CD14-positive monocyte (primary cell): ENCODE measurements at regions of chr3 and their contacts with region 1.

Region 1: DNA sequence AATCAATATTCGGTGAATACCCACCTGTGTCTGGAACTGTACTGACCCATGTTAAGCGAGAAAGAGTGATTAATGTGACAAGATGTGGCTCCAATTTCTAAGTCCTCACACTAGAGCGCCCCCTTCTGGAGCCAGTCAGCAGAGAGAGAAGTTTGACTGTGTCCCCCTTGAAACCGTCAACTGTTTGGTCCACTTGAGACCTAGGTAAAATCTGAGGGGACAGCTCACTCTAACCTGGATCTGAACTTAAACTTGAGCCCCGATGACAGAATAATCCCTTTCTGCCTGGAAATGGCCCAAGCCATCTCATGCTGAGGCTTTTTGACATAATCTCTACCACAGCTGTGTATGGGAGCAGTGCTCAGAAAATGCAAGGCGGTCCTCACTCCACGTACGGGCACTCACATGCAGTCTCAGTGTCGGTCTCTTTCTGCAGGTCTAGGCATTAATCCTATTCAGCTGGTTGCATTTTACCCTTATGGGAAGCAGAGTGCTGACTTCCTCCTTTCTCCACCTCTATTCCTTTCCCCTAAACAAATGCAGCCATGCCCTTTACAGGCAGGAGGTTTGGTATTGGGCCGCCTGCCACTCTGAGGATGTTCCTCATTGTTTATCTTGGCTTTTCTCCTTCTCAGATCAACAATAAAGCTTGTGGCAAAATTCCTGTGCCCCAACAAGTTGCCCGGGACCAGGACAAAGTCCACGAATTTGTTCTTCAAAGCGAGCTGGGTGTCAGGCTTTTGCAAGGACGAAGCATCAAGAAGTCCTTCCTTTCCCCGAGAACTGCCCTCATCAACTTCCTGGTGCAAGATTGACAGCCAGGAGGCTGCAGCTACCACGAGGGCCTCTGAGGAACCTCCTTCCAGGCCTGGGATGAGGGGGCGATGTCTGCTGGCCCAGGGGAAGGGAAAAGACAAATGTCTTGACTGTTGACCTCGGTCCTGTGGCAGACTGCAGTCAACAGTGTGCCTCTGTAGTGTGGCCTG is 47.5 kb upstream of the LIMD1 start:
- DNase-seq: peak in 2 of 3 donors; percentile 38 to 39
- H3K4me3 ChIP-seq: peak overlapping the region in 1 of 3 experiments; percentile 10
- H3K4me3 Mint-ChIP-seq: peak overlapping the region; percentile 25 to 72
- H3K27ac ChIP-seq: peak overlapping the region; percentile 68 to 86
- H3K27ac Mint-ChIP-seq: peak overlapping the region; percentile 86 to 98 (median 96)
- H3K4me1 ChIP-seq: peaks cover 51 to 57% of the 10 kb centered on the region in 2 donors
- H3K4me1 Mint-ChIP-seq: peaks cover 52% of the 10 kb centered on the region
- H3K27me3 ChIP-seq: no peaks in the 10 kb centered on the region
- H3K27me3 Mint-ChIP-seq: peaks cover 0 to 2% (median 2%) of the 10 kb centered on the region in 3 donors
- CTCF ChIP-seq: peak; percentile 39

Region 2: GRCh38 chr3:45631486-45631885 is 84.5 kb after region 1 on chr3:
- intact Hi-C with region 1: no loop called
- DNase-seq: peak in 2 of 3 donors; percentile 40 to 55
- H3K4me3 ChIP-seq: no peak overlapping the region
- H3K4me3 Mint-ChIP-seq: peak overlapping the region; percentile 49 to 66
- H3K27ac ChIP-seq: peak overlapping the region; percentile 43 to 80
- H3K27ac Mint-ChIP-seq: peak overlapping the region; percentile 79 to 95 (median 91)
- H3K4me1 ChIP-seq: peaks cover 41 to 52% of the 10 kb centered on the region in 2 donors
- H3K4me1 Mint-ChIP-seq: peaks cover 61% of the 10 kb centered on the region
- H3K27me3 ChIP-seq: no peaks in the 10 kb centered on the region
- H3K27me3 Mint-ChIP-seq: peaks cover 0 to 4% (median 3%) of the 10 kb centered on the region in 3 donors
- CTCF ChIP-seq: no peak

Region 3: GRCh38 chr3:45647148-45647619 is 100.2 kb after region 1 on chr3:
- intact Hi-C with region 1: loop called in 1 of 2 experiments (anchors 5 kb)
- DNase-seq: peak; percentile 82 to 94 (median 92)
- H3K4me3 ChIP-seq: peak overlapping the region in 1 of 3 experiments; percentile 19
- H3K4me3 Mint-ChIP-seq: peak overlapping the region; percentile 20 to 53
- H3K27ac ChIP-seq: peak overlapping the region; percentile 95 to 97
- H3K27ac Mint-ChIP-seq: peak overlapping the region; percentile 90 to 99 (median 98)
- H3K4me1 ChIP-seq: peaks cover 53 to 59% of the 10 kb centered on the region in 2 donors
- H3K4me1 Mint-ChIP-seq: peaks cover 64% of the 10 kb centered on the region
- H3K27me3 ChIP-seq: no peaks in the 10 kb centered on the region
- H3K27me3 Mint-ChIP-seq: peaks cover 0 to 6% (median 0%) of the 10 kb centered on the region in 3 donors
- CTCF ChIP-seq: no peak